ENCODE measurements at regions of chr21 and their contacts with region 1.

Region 1: GRCh38 chr21:42117229-42117966 is 46.3 kb downstream of the UMODL1 start:
- DNase-seq: peak; percentile 78
- H3K4me3 ChIP-seq: peak overlapping the region in 1 of 3 experiments; percentile 51
- H3K27ac ChIP-seq: no peak overlapping the region
- H3K4me1 ChIP-seq: peaks cover 4% of the 10 kb centered on the region
- H3K27me3 ChIP-seq: peaks cover 26 to 33% of the 10 kb centered on the region in 2 experiments
- CTCF ChIP-seq: peak; percentile 87 to 91
- POLR2A ChIP-seq: no peak

Region 2: DNA sequence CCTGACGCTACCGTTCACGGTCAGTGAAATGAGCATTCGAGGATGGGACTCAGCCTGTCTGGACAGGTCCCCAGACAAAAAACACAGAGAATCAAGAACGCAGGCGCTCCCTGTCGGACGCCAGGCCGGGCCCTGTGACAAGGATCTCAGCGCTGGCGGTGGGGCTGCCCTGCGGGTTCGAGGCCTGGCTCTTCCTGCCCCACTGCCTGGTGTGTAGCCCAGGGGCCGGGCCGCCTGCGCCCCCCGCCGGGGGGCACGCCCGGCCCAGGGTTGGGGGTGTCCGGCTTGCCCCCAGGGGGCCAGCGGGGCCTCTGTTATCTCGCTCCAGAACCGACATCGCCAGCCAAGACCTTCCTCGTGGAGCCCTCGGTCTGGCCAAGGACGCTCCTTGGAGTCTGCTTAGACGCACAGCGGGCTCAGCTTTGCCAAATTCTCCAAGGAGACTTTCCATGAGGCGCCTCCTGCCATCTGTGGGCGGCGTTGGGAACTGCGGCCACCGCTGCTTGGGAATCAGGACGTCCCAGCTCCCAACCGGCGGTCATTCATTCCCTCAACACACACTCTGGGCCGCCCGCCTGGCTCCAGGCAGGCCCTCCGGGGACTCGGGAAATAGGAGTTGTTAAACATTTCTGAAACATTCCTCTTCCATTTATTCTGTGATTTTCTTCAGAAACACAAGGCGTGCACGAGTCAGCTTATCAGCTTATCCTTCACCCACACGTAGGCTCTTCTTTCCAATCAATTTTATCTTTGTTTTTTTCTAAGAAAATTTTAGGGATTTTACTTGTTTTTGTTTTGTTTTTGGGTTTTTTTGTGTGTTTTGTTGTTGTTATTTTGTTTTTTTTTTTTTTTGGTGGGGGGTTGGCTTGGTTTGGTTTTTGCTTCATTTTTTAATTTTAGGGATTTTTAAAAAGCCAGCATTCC is 339.2 kb before region 1 on chr21:
- CTCF ChIA-PET with region 1: interaction called, 10 read pairs
- POLR2A ChIA-PET with region 1: no interaction called
- dilution Hi-C with region 1: no loop called
- intact Hi-C with region 1: no loop called
- DNase-seq: peak; percentile 58
- H3K4me3 ChIP-seq: no peak overlapping the region
- H3K27ac ChIP-seq: no peak overlapping the region
- H3K4me1 ChIP-seq: no peaks in the 10 kb centered on the region
- H3K27me3 ChIP-seq: peaks cover 23 to 51% of the 10 kb centered on the region in 2 experiments
- CTCF ChIP-seq: peak; percentile 77 to 95
- POLR2A ChIP-seq: no peak

Region 3: GRCh38 chr21:41879190-41879998 is 238.0 kb before region 1 on chr21 and contains the start of gene PRDM15:
- CTCF ChIA-PET with region 1: interaction called, 8 read pairs
- POLR2A ChIA-PET with region 1: no interaction called
- dilution Hi-C with region 1: no loop called
- intact Hi-C with region 1: loop called (anchors 2 kb)
- DNase-seq: peak; percentile 46
- H3K4me3 ChIP-seq: peak within 1 kb of the TSS; percentile 57 to 94 (median 88)
- H3K27ac ChIP-seq: peak within 1 kb of the TSS; percentile 83
- H3K4me1 ChIP-seq: peaks cover 12% of the 10 kb centered on the region
- H3K27me3 ChIP-seq: no peaks in the 10 kb centered on the region
- CTCF ChIP-seq: no peak
- POLR2A ChIP-seq: peak; percentile 32
- total RNA-seq, gene PRDM15: 10.0 and 12.9 TPM in 2 replicates

Region 4: DNA sequence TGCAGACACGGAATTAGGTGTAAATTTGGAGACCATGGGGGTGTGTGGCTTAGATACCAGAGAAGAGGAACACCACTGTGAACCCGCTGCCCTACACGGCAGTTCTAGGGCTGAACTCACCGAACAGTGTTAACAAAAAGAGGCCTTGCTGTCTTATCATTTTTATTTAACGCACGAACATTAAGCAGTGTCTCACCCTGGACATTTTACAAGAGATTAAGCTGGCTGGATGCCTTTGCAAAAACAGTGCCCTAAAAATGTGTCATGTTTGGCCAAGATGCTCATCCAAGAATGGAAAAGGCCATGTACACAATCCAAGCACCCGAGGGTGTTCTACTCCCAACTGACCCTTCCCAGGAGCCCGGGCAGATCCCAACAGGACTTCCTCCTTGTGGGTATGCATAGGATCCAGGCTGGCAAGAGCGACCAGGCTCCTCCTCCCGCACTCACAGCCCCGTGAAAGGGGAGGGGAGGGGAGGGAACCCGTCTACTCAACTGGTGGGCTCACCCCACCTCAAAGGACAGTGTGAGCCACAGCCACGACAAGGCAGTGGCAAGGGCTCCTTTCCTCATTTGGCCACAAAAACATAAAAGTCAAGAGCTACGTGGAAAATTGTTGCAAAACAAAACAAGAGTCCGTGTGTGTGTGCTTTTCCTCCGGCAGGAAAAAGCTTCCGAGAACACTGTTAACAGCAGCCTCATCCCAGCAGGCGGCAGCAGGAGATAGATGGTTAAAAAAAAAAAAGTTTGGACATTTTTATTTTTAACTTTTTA is 183.9 kb before region 1 on chr21:
- CTCF ChIA-PET with region 1: interaction called, 93 read pairs
- POLR2A ChIA-PET with region 1: no interaction called
- dilution Hi-C with region 1: no loop called
- intact Hi-C with region 1: loop called (anchors 1 kb)
- DNase-seq: peak; percentile 78
- H3K4me3 ChIP-seq: peak overlapping the region in 2 of 3 experiments; percentile 15 to 49
- H3K27ac ChIP-seq: peak overlapping the region; percentile 80
- H3K4me1 ChIP-seq: peaks cover 26% of the 10 kb centered on the region
- H3K27me3 ChIP-seq: no peaks in the 10 kb centered on the region
- CTCF ChIP-seq: peak; percentile 38 to 44
- POLR2A ChIP-seq: no peak

Region 5: GRCh38 chr21:41961282-41961701 is 156.1 kb before region 1 on chr21:
- CTCF ChIA-PET with region 1: interaction called, 16 read pairs
- POLR2A ChIA-PET with region 1: no interaction called
- dilution Hi-C with region 1: no loop called
- intact Hi-C with region 1: no loop called
- DNase-seq: peak; percentile 87
- H3K4me3 ChIP-seq: no peak overlapping the region
- H3K27ac ChIP-seq: peak overlapping the region; percentile 81
- H3K4me1 ChIP-seq: peaks cover 48% of the 10 kb centered on the region
- H3K27me3 ChIP-seq: no peaks in the 10 kb centered on the region
- CTCF ChIP-seq: no peak
- POLR2A ChIP-seq: peak; percentile 19

Region 6: GRCh38 chr21:42073145-42074092 is 44.0 kb before region 1 on chr21:
- CTCF ChIA-PET with region 1: interaction called, 11 read pairs
- POLR2A ChIA-PET with region 1: no interaction called
- dilution Hi-C with region 1: no loop called
- intact Hi-C with region 1: no loop called
- DNase-seq: no peak
- H3K4me3 ChIP-seq: no peak overlapping the region
- H3K27ac ChIP-seq: no peak overlapping the region
- H3K4me1 ChIP-seq: no peaks in the 10 kb centered on the region
- H3K27me3 ChIP-seq: peaks cover 16 to 17% of the 10 kb centered on the region in 2 experiments
- CTCF ChIP-seq: no peak
- POLR2A ChIP-seq: no peak

Measured in endothelial cell of umbilical vein (primary cell).